Calu3 (cell line): ENCODE measurements at regions of chr2 and their contacts with region 1.

Region 1: DNA sequence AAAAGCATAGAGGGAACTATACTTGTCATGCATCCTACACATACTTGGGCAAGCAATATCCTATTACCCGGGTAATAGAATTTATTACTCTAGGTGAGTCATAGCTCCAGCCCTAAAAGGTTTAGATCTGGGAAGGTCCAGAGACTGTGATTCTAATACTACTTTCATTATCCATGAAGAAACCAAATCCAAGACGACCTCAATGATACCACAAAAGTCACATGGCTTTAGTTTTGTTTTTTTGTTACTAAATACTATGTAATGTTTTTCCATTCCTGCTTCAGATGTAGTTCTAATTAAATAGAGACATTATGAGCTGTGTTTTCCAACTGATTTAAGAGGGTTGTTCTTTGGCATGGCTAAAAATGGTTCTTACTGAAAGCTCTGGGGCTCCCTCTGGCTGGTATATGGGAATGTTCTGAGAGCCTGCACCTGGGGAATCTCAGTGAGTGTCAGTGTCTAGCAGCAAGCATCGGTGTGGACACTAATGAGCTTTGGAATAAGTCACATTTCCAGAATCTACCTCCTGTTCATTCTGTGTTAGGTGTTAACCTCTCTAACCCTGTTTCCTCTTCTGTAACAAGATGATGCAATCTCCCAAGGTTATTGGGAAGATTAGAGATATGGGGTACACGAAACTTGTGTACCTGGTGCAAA is 20.5 kb upstream of the IL1RL2 start:
- DNase-seq: peak; percentile 34
- H3K4me3 Mint-ChIP-seq: no peak overlapping the region
- H3K27ac Mint-ChIP-seq: no peak overlapping the region
- H3K4me1 Mint-ChIP-seq: no peaks in the 10 kb centered on the region
- H3K27me3 Mint-ChIP-seq: no peaks in the 10 kb centered on the region
- CTCF ChIP-seq: peak; percentile 33

Region 2: GRCh38 chr2:101883863-101884262 is 282.5 kb before region 1 on chr2:
- CTCF ChIA-PET with region 1: interaction called, 5 read pairs
- intact Hi-C with region 1: loop called (anchors 5 kb)
- DNase-seq: peak; percentile 28
- H3K4me3 Mint-ChIP-seq: no peak overlapping the region
- H3K27ac Mint-ChIP-seq: no peak overlapping the region
- H3K4me1 Mint-ChIP-seq: no peaks in the 10 kb centered on the region
- H3K27me3 Mint-ChIP-seq: no peaks in the 10 kb centered on the region
- CTCF ChIP-seq: peak; percentile 44

Region 3: GRCh38 chr2:102005989-102006885 is 160.1 kb before region 1 on chr2:
- CTCF ChIA-PET with region 1: interaction called, 10 read pairs
- intact Hi-C with region 1: no loop called
- DNase-seq: peak; percentile 56
- H3K4me3 Mint-ChIP-seq: no peak overlapping the region
- H3K27ac Mint-ChIP-seq: no peak overlapping the region
- H3K4me1 Mint-ChIP-seq: no peaks in the 10 kb centered on the region
- H3K27me3 Mint-ChIP-seq: no peaks in the 10 kb centered on the region
- CTCF ChIP-seq: peak; percentile 56

Region 4: DNA sequence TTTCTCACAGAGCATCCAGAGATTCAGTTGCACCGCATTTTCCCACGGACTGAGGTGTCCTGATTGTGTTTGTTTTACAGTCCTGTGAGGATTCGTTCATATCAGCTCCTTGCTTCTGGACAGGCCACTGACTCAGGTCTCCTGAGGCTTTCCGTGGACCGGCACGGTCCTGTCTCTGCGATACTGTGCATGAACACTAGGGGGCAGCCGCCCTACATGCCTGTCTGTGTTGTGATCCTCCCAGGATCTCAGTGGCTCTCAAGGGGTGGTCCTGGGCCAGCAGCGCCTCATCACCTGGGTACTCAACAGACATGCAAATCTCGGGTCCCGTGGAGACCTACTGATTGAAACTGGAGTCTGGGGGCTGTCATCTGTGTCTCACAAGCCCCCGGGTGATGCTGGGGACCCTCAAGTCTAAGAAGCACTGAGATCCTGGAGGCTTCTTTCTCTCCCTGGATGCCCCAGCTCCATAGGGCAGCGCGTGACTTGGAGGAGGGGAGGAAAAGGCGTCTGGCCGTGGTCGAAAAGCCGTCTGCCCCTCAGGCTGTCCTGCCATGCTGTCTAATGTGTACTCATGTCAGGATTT is 145.6 kb before region 1 on chr2:
- CTCF ChIA-PET with region 1: interaction called, 27 read pairs
- intact Hi-C with region 1: loop called (anchors 1 kb)
- DNase-seq: peak; percentile 90
- H3K4me3 Mint-ChIP-seq: no peak overlapping the region
- H3K27ac Mint-ChIP-seq: no peak overlapping the region
- H3K4me1 Mint-ChIP-seq: peaks cover 14% of the 10 kb centered on the region
- H3K27me3 Mint-ChIP-seq: no peaks in the 10 kb centered on the region
- CTCF ChIP-seq: peak; percentile 95

Region 5: GRCh38 chr2:102033031-102033749 is 133.1 kb before region 1 on chr2:
- CTCF ChIA-PET with region 1: interaction called, 11 read pairs
- intact Hi-C with region 1: no loop called
- DNase-seq: peak; percentile 83
- H3K4me3 Mint-ChIP-seq: peak overlapping the region; percentile 33
- H3K27ac Mint-ChIP-seq: peak overlapping the region; percentile 84
- H3K4me1 Mint-ChIP-seq: peaks cover 18% of the 10 kb centered on the region
- H3K27me3 Mint-ChIP-seq: no peaks in the 10 kb centered on the region
- CTCF ChIP-seq: no peak

Region 6: DNA sequence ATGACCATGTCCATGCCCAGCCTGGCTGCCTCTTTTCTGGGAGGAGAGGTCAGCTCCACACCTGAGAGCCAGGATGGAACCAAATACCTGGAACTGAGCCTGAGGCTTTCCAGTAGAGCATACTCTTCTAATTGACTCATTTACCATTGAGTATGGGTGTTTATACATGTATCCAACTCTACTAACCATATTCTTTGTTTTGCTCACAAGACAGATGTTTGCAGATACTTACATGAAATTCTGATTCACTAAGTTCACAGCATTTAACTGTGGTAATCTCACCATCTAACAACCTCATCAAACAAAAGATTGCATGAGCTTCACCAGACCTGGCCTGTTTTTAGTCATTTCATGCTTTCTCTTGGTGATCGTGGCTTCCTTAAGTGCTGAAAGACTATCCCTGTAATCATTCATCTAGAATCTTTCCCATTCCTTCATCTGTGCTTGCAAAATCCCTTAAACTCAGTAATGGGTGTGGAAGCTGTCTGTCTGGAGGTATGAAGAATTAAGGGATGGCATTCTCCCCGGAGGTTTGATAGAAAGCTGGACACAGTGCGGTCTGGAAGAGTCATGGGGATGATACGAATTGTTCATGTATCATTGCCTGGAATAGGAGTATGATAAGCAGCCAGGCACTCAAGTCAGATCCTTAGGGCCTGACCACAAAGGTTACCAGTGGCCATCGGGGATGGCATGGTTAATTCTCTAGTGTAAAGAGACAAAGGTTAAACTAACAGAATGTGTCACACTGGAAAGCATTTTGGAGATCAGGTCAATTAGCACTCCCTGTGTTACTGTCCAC is 65.8 kb before region 1 on chr2:
- CTCF ChIA-PET with region 1: no interaction called
- intact Hi-C with region 1: no loop called
- DNase-seq: no peak
- H3K4me3 Mint-ChIP-seq: no peak overlapping the region
- H3K27ac Mint-ChIP-seq: no peak overlapping the region
- H3K4me1 Mint-ChIP-seq: peaks cover 43% of the 10 kb centered on the region
- H3K27me3 Mint-ChIP-seq: no peaks in the 10 kb centered on the region
- CTCF ChIP-seq: no peak